ENCODE measurements at regions of chr3 and their contacts with region 1.

Region 1: GRCh38 chr3:185659942-185660921 is 74.1 kb downstream of the SENP2 start:
- DNase-seq: peak; percentile 85 to 88
- ATAC-seq: peak; percentile 67
- H3K4me3 ChIP-seq: no peak overlapping the region
- H3K27ac ChIP-seq: no peak overlapping the region
- H3K4me1 ChIP-seq: no peaks in the 10 kb centered on the region
- H3K27me3 ChIP-seq: no peaks in the 10 kb centered on the region

Region 2: DNA sequence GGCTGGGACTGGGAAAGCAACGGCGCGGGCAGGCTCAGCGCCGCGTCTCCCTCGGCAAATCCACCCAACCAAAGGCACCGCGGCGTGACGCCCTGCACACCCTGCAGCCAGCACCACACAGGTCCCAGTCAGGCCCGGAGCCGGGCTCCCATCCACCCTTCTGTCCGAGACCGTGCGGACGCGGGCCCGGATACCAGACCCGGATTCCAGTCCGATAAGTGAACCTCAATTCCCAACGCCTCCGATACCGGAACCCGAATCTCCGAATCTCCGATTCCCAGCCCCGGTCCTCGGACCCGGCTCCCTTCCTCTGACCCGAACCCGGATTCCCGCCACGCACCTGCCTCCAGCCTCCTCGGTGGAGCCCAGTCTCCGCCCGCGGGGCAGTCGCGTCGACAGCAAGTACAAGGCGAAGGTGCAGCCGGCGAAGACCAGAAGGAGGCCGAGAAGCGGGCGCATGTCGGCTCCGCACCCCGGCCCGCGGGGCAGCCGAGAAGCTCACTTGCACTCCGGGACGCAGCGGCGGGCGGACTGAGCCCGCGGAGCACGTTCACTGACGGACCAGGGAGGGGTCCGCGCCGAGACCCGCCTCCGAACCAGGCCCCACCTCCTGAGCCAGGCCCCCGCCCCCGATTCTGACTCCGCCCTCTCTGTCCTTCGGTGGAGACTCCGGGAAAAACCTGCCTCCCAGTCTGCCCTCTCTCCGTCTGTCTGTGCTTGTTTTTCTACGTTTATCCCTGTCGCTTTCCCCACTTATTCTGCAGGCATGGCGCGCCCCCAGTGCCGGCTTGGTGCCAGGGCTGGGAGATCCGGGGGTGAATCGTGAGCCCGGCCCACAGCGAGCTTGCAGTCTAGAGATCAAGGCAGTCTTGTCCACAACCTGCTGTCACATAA is 161.5 kb before region 1 on chr3 and contains the start of gene TMEM41A:
- intact Hi-C with region 1: no loop called
- DNase-seq: peak; percentile 96 to 98
- ATAC-seq: peak; percentile 99
- H3K4me3 ChIP-seq: peak within 1 kb of the TSS; percentile 58 to 63
- H3K27ac ChIP-seq: peak within 1 kb of the TSS in 1 of 2 donors; percentile 30
- H3K4me1 ChIP-seq: no peaks in the 10 kb centered on the region
- H3K27me3 ChIP-seq: no peaks in the 10 kb centered on the region
- total RNA-seq, gene TMEM41A: 13.2 to 15.6 TPM

Region 3: DNA sequence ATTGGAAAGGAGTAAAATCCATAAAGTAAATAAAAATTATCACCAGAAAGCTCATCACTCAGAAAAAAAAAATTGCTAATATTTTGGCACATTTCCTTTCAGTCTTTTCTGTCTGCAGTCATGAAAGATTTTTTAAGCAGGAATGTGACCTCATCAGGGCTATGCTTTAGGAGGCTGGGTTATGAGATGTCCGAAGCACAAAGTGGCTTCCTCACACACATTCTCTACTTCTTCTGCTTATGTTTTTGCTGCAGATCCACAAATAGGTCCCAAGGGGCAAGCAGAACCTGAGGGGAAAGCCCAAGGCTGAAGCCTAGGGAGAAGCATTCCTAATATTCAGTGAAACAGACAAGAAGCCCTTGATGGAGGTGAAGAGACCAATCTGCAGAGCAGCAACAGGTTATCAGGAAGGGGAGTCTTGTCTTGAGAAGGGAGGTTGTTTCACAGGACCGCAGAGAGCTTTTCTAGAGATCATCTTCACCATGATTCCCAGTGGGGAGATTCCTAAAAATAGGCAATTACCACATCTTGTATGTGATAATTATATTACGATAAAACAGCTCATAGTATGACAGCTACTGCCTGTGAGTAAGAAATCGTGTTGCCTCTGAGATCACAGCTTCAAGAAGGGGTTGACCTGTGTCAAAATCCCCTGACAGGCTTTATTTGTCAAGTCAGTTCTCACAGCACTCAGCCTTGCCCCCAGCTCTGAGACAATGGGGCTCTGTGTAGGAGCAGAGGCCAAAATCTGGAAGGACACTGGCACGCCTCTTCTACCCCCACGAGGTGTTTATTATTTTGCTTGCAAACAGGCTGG is 104.1 kb after region 1 on chr3:
- intact Hi-C with region 1: loop called in 1 of 2 experiments (anchors 2 kb)
- DNase-seq: no peak
- ATAC-seq: no peak
- H3K4me3 ChIP-seq: no peak overlapping the region
- H3K27ac ChIP-seq: no peak overlapping the region
- H3K4me1 ChIP-seq: peaks cover 0 to 1% of the 10 kb centered on the region in 2 donors
- H3K27me3 ChIP-seq: peaks cover 0 to 2% of the 10 kb centered on the region in 2 donors

Region 4: DNA sequence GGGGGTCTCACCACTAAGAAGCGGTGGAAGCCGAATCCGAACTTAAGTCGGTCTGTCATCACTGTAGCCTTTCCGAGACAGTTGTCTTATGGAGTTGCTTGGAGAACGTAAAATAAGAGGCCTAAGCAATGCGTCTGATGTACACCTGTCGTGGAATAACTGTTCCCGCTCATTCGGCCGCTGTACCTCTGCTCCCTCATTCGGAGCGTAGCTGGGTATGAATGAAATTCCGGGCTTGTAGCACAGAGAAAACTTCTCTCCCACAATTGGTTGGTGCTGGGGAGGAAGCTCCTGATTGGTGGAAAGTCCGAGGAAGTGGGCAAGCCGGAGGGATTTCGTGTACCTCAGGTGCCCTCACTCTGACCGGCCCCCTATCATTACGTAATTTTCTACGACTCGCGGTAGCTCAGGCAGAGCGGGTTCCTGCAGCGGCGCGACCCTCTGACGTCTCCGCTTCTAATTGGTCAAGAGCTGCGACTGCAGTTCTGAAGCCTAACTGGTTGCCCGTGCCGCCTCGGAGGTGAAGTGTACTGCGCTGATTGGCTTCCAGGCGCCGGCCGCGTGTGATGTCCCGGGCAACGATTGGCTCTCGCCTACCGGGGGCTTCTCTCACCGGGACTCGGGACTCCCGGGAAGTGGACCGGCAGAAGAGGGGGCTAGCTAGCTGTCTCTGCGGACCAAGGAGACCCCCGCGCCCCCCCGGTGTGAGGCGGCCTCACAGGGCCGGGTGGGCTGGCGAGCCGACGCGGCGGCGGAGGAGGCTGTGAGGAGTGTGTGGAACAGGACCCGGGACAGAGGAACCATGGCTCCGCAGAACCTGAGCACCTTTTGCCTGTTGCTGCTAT is 910.1 kb after region 1 on chr3 and contains the start of gene DNAJB11:
- intact Hi-C with region 1: loop called in 1 of 2 experiments (anchors 10 kb)
- DNase-seq: peak; percentile 100
- ATAC-seq: peak; percentile 97
- H3K4me3 ChIP-seq: peak within 1 kb of the TSS; percentile 59 to 67
- H3K27ac ChIP-seq: peak within 1 kb of the TSS in 1 of 2 donors; percentile 71
- H3K4me1 ChIP-seq: peaks cover 0 to 3% of the 10 kb centered on the region in 2 donors
- H3K27me3 ChIP-seq: no peaks in the 10 kb centered on the region
- total RNA-seq, gene DNAJB11: 35.0 to 47.0 TPM

Measured in aorta (tissue), 5 donors.